CD14-positive monocyte (primary cell): ENCODE measurements at regions of chr17 and their contacts with region 1.

Region 1: GRCh38 chr17:4412933-4413831 is 20.6 kb upstream of the SPNS3 start:
- DNase-seq: peak; percentile 82 to 85 (median 83)
- H3K4me3 ChIP-seq: peak overlapping the region in 1 of 3 experiments; percentile 63
- H3K4me3 Mint-ChIP-seq: peak overlapping the region; percentile 73 to 76
- H3K27ac ChIP-seq: peak overlapping the region; percentile 11 to 64
- H3K27ac Mint-ChIP-seq: peak overlapping the region; percentile 59 to 93 (median 85)
- H3K4me1 ChIP-seq: peaks cover 9% of the 10 kb centered on the region in 2 donors
- H3K4me1 Mint-ChIP-seq: peaks cover 18% of the 10 kb centered on the region
- H3K27me3 ChIP-seq: no peaks in the 10 kb centered on the region
- H3K27me3 Mint-ChIP-seq: peaks cover 11 to 16% (median 15%) of the 10 kb centered on the region in 3 donors
- CTCF ChIP-seq: peak; percentile 79

Region 2: DNA sequence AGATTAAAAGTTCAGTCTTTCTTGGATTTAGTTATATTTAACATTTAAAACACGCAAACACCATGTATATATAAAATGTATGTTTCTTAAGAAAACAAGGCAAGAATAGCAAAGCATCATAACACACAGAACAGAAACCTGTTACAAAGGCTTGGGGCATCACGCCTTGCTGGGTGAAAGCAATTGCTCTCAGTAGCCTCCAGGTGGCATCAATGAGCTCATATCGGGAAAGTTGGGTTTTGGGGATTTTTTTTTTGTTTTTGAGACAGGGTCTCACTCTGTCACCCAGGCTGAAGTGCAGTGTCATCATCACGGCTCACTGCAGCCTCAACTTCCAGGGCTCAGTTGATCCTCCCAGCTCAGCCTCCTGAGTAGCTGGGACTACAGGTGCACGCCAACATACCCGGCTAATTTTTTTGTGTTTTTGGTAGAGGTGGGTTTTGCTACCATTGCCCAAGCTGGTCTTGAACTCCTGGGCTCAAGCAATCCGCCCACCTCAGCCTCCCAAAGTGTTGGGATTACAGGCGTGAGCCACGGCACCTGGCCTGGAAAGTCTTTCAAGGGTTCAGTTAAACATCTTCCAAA is 213.3 kb before region 1 on chr17:
- intact Hi-C with region 1: loop called in 1 of 2 experiments (anchors 2 kb)
- DNase-seq: peak; percentile 17 to 44 (median 29)
- H3K4me3 ChIP-seq: no peak overlapping the region
- H3K4me3 Mint-ChIP-seq: no peak overlapping the region
- H3K27ac ChIP-seq: no peak overlapping the region
- H3K27ac Mint-ChIP-seq: no peak overlapping the region
- H3K4me1 ChIP-seq: no peaks in the 10 kb centered on the region
- H3K4me1 Mint-ChIP-seq: no peaks in the 10 kb centered on the region
- H3K27me3 ChIP-seq: peaks cover 9 to 14% of the 10 kb centered on the region in 2 donors
- H3K27me3 Mint-ChIP-seq: peaks cover 22 to 34% (median 30%) of the 10 kb centered on the region in 3 donors
- CTCF ChIP-seq: peak; percentile 83

Region 3: GRCh38 chr17:4215882-4216570 is 197.2 kb before region 1 on chr17:
- intact Hi-C with region 1: loop called (anchors 5 kb)
- DNase-seq: no peak
- H3K4me3 ChIP-seq: no peak overlapping the region
- H3K4me3 Mint-ChIP-seq: no peak overlapping the region
- H3K27ac ChIP-seq: no peak overlapping the region
- H3K27ac Mint-ChIP-seq: peak overlapping the region in 1 of 7 donors; percentile 30
- H3K4me1 ChIP-seq: peaks cover 13 to 17% of the 10 kb centered on the region in 2 donors
- H3K4me1 Mint-ChIP-seq: peaks cover 18% of the 10 kb centered on the region
- H3K27me3 ChIP-seq: peaks cover 5 to 13% of the 10 kb centered on the region in 2 donors
- H3K27me3 Mint-ChIP-seq: peaks cover 17 to 22% (median 17%) of the 10 kb centered on the region in 3 donors
- CTCF ChIP-seq: no peak

Region 4: GRCh38 chr17:4554997-4555799 is 142.0 kb after region 1 on chr17 and contains the start of gene MYBBP1A:
- intact Hi-C with region 1: no loop called
- DNase-seq: peak; percentile 94 to 96 (median 95)
- H3K4me3 ChIP-seq: peak within 1 kb of the TSS; percentile 70 to 89 (median 87)
- H3K4me3 Mint-ChIP-seq: peak within 1 kb of the TSS; percentile 91 to 97
- H3K27ac ChIP-seq: peak within 1 kb of the TSS; percentile 62 to 80
- H3K27ac Mint-ChIP-seq: peak within 1 kb of the TSS; percentile 86 to 96 (median 95)
- H3K4me1 ChIP-seq: peaks cover 19 to 26% of the 10 kb centered on the region in 2 donors
- H3K4me1 Mint-ChIP-seq: peaks cover 21% of the 10 kb centered on the region
- H3K27me3 ChIP-seq: no peaks in the 10 kb centered on the region
- H3K27me3 Mint-ChIP-seq: peaks cover 0 to 2% (median 1%) of the 10 kb centered on the region in 3 donors
- CTCF ChIP-seq: peak; percentile 14
- polyA plus RNA-seq, gene MYBBP1A: 4.2 to 22.3 (median 5.3) TPM

Region 5: DNA sequence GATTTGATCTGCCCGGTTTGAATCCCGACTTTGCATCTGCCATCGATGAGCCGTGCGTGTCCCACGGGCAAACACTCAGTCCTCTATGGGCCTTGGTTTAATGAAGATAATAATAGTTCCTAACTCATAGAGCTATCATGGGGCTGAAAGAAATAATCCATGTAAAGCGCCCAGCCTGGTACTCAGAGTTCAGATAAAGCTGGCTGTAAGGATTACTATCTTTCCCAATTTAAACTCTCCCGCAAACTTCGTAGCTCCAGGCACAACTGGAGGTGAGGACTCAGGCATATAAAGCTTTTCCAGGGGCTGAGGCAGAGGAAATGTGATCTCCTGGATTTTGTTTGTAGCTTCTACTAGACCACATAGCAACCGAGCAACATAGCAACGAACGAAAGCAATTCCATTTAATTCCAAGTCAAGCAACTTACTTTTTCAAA is 212.0 kb after region 1 on chr17:
- intact Hi-C with region 1: no loop called
- DNase-seq: no peak
- H3K4me3 ChIP-seq: no peak overlapping the region
- H3K4me3 Mint-ChIP-seq: no peak overlapping the region
- H3K27ac ChIP-seq: no peak overlapping the region
- H3K27ac Mint-ChIP-seq: no peak overlapping the region
- H3K4me1 ChIP-seq: no peaks in the 10 kb centered on the region
- H3K4me1 Mint-ChIP-seq: peaks cover 12% of the 10 kb centered on the region
- H3K27me3 ChIP-seq: peaks cover 0 to 3% of the 10 kb centered on the region in 2 donors
- H3K27me3 Mint-ChIP-seq: peaks cover 0 to 18% (median 5%) of the 10 kb centered on the region in 3 donors
- CTCF ChIP-seq: no peak